ENCODE measurements at regions of chr10 and their contacts with region 1.

Region 1: DNA sequence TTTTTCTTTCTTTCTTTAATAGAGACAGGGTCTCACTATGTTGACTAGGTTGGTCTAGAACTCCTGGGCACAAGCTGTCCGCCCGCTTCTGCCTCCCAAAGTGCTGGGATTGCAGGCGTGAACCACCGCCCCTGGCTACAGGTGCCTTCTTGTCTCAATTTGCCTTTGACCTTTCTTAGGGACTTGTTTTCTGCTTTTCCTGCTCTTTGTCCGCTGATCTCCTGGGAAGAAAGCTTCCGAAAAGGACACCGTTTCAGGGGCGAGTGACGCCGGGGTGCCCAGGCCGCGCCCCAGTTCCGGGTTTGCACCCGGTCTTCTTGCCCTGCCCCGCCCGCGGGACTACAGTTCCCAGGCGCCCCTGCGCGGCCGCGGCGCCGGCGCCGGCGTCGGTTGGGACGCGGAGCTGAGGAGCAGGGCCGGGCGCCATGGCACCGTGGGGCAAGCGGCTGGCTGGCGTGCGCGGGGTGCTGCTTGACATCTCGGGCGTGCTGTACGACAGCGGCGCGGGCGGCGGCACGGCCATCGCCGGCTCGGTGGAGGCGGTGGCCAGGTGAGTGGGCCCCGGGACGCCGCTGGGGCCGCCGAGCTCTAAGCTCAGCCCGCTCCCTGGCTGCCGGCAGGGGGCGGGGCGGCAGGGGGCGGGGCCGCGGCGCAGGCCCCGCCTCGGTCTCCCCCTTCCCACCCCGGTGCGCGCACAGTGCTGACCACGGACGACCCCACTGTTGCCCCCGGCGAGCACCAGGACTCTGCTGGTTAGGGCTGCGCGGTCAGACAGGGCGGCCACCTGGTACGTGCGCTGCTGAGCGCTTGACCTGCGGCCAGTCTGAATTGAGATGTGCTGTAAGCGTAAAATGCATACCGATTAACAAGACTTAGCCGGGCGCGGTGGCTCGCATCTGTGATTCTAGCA is at the start of gene LHPP:
- DNase-seq: peak; percentile 90
- H3K4me3 Mint-ChIP-seq: peak within 1 kb of the TSS; percentile 88
- H3K27ac Mint-ChIP-seq: peak within 1 kb of the TSS; percentile 82
- H3K4me1 Mint-ChIP-seq: peaks cover 36% of the 10 kb centered on the region
- H3K27me3 Mint-ChIP-seq: peaks cover 8% of the 10 kb centered on the region
- total RNA-seq, gene LHPP: 17.6 to 20.7 TPM

Region 2: GRCh38 chr10:124403548-124403947 is 58.1 kb before region 1 on chr10:
- CTCF ChIA-PET with region 1: interaction called, 12 read pairs
- POLR2A ChIA-PET with region 1: interaction called, 6 read pairs
- DNase-seq: peak; percentile 36
- H3K4me3 Mint-ChIP-seq: no peak overlapping the region
- H3K27ac Mint-ChIP-seq: peak overlapping the region; percentile 55
- H3K4me1 Mint-ChIP-seq: peaks cover 9% of the 10 kb centered on the region
- H3K27me3 Mint-ChIP-seq: no peaks in the 10 kb centered on the region

Region 3: DNA sequence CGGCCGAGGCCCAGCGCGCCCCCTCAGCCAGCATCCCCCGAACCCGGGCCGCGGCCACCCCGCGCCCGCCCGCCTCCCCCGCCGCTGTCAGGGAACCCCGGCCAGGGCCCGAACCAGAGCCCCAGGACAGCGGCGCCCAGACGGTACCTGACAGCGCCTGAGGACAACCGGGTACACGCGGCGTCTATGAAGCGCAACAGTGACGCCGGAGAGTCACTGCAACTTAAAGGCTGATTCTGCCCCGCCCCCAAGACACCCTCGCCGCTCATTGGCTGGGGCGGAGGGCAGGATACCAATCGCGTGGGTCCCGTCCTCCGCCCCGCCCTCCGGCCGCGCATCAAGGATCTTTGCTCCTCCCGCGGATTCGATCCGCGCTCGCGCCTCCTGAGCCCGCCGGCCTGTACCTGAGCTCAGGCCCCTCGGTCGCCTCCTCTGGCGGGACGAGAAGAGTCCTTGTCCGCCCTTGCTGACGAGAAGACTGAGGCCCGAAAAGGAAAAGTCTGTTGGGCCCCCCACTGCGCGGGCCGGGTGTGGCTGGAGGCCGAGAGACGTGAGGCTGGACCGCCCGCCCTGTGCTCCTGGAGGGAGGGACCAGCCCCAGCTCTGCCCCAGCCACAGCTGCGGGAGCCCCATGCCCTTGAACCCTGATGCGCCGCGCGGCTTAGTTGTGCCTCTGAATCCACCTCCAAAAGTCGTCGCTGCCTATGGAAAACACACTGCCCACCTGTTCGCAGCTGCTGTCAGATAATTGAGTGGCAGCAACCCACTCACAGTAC is 42.8 kb before region 1 on chr10 and contains the start of gene OAT:
- CTCF ChIA-PET with region 1: interaction called, 7 read pairs
- POLR2A ChIA-PET with region 1: interaction called, 24 read pairs
- DNase-seq: peak; percentile 97
- H3K4me3 Mint-ChIP-seq: peak within 1 kb of the TSS; percentile 77
- H3K27ac Mint-ChIP-seq: peak within 1 kb of the TSS; percentile 49
- H3K4me1 Mint-ChIP-seq: peaks cover 12% of the 10 kb centered on the region
- H3K27me3 Mint-ChIP-seq: peaks cover 8% of the 10 kb centered on the region
- total RNA-seq, gene OAT: 20.7 to 21.3 TPM